H1 (cell line): ENCODE measurements at regions of chr9 and their contacts with region 1.

Region 1: GRCh38 chr9:74122661-74123060 is 374.5 kb upstream of the RORB start:
- DNase-seq: no peak
- H3K4me3 ChIP-seq: no peak overlapping the region
- H3K27ac ChIP-seq: no peak overlapping the region
- H3K4me1 ChIP-seq: peaks cover 0 to 2% (median 0%) of the 10 kb centered on the region in 4 experiments; a peak in 2 of 7 replicates
- H3K27me3 ChIP-seq: no peaks in the 10 kb centered on the region; a peak in 1 of 7 replicates
- CTCF ChIP-seq: no peak
- EP300 ChIP-seq: no peak
- POLR2A ChIP-seq: no peak
- RAD21 ChIP-seq: no peak

Region 2: DNA sequence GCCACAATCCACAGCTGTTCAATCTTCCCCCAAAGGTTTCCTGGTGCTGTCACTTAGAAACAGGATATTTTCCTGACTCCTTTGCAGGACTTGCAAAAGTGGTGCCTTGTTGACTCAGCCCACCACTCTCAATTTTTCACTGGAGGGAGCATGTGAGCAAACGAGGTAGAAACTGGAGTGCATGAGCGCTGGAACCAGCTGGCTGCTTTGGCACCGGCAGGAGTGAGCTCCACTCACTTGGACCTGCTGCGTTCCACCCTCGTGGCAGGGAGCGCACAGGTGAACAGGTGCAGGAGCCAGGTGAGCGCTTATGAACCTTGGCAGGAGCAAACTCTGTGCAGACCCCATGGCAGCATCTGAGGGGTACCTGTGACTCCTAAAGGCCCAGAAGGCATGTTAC is 10.3 kb after region 1 on chr9:
- CTCF ChIA-PET with region 1: interaction called, 12 read pairs
- POLR2A ChIA-PET with region 1: no interaction called
- DNase-seq: peak in 1 of 2 experiments; percentile 54
- H3K4me3 ChIP-seq: no peak overlapping the region
- H3K27ac ChIP-seq: no peak overlapping the region
- H3K4me1 ChIP-seq: no peaks in the 10 kb centered on the region
- H3K27me3 ChIP-seq: no peaks in the 10 kb centered on the region
- CTCF ChIP-seq: peak; percentile 23 to 58 (median 44)
- EP300 ChIP-seq: no peak
- POLR2A ChIP-seq: no peak
- RAD21 ChIP-seq: peak; percentile 60 to 71